HepG2 (cell line): ENCODE measurements at regions of chr9 and their contacts with region 1.

Region 1: DNA sequence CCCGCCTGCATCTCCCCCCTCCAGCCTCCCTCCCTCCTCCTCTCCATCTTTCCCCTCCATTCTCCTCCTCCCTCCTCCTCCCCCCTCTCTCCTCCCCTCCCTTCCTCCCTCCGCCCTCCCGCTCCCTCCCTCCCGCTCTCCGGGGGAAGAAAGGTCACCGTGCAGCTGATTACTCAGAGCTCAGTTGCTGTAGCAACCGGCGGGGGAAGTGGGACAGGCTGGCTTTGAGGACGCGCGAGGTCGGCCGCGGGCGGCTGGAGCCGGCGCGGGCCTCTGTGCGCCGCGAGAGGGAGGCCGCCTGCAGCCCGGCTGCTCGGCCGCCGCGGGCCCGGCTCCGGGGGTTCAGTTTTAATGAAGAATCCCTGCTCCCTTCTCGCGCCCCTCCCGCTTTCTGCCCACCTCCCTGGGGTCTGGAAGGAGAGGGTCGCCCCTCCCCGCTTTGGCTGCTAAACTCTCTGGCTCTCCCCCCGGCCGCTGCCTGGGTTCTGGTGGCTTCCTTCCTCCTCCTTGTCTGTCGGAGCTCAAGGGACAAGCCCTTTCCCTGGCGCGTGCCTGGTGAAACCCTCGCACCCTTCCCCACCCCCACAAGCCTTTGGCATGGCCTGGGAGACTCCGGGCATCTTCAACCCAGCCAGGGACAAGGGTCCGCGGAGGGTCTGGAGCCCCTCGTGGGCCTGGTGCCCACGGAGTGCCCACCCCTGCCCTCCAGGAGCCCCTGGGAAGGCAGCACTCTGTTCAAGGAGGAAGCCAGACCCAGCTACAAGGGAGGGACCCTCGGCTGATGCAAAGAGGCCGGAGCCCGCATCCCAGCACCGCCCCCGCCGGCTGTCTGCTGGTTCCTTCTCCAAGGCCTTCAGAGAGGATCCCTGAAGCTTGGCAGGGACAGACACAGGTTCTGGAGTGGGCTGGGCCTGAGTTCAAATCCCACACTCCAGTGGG is 160.3 kb downstream of the C9orf50 start:
- DNase-seq: peak; percentile 94
- ATAC-seq: peak; percentile 82
- H3K4me3 ChIP-seq: peak overlapping the region; percentile 49 to 78 (median 57)
- H3K27ac ChIP-seq: peak overlapping the region; percentile 73
- H3K4me1 ChIP-seq: peaks cover 47% of the 10 kb centered on the region
- H3K27me3 ChIP-seq: peaks cover 4 to 10% of the 10 kb centered on the region in 2 experiments; a peak in 3 of 5 replicates
- CTCF ChIP-seq: peak; percentile 18; the same call in 1 of the 2 replicates
- EP300 ChIP-seq: peak in 1 of 2 experiments; percentile 78; a peak in 3 of 4 replicates
- POLR2A ChIP-seq: peak; percentile 58 to 60; a peak in 3 of 4 replicates
- RAD21 ChIP-seq: peak; percentile 78

Region 2: GRCh38 chr9:129333953-129334724 is 126.5 kb before region 1 on chr9:
- CTCF ChIA-PET with region 1: no interaction called
- POLR2A ChIA-PET with region 1: interaction called, 10 read pairs
- in situ Hi-C with region 1: no loop called
- intact Hi-C with region 1: no loop called
- DNase-seq: peak; percentile 94
- ATAC-seq: peak; percentile 93
- H3K4me3 ChIP-seq: peak overlapping the region in 2 of 3 experiments; percentile 30 to 65; a peak in 4 of 6 replicates
- H3K27ac ChIP-seq: peak overlapping the region; percentile 93
- H3K4me1 ChIP-seq: peaks cover 56% of the 10 kb centered on the region
- H3K27me3 ChIP-seq: no peaks in the 10 kb centered on the region
- CTCF ChIP-seq: peak; percentile 47; the same call in 1 of the 2 replicates
- EP300 ChIP-seq: peak in 1 of 2 experiments; percentile 84; a peak in 2 of 4 replicates
- POLR2A ChIP-seq: no peak
- RAD21 ChIP-seq: peak; percentile 75

Region 3: DNA sequence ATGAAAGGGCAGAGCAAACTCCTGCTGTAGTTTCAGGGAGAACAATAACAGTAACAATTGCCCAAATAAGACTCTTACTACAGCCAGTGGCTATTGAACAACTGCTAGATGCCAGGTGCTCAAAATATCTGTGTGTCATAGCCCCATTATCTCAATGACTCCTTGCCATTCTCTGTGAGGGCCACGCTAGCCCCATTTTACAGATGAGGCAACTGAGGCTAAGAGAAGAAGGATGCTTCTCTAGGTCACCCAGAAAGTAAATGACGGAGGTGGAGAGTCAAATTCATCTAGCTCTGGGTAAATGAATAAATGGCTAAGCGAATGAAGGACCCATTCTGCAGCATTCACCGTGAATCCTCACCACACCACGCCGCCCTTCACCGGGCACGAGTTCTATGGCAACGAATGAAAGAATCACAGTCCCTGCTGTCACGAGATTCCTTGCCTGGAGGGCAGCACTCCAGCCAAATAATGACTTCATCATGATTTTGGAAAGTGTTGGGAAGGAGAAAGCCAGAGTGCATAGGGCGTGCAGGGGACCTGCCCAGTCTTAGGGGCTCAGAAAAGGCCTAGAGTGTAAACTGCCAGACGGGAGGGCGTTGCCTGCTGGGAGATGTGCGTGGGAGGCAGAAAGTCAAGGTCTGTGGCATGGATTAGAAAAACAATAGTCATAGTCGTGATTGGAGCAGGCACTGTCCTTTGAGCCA is 13.1 kb after region 1 on chr9:
- CTCF ChIA-PET with region 1: no interaction called
- POLR2A ChIA-PET with region 1: interaction called, 10 read pairs
- in situ Hi-C with region 1: no loop called
- intact Hi-C with region 1: no loop called
- DNase-seq: no peak
- ATAC-seq: no peak
- H3K4me3 ChIP-seq: no peak overlapping the region
- H3K27ac ChIP-seq: no peak overlapping the region
- H3K4me1 ChIP-seq: peaks cover 78% of the 10 kb centered on the region
- H3K27me3 ChIP-seq: 0 out of 5 replicates have a peak, but pooled peaks cover 0 to 4% of the 10 kb centered on the region in 2 experiments
- CTCF ChIP-seq: no peak
- EP300 ChIP-seq: no peak
- POLR2A ChIP-seq: no peak
- RAD21 ChIP-seq: no peak

Region 4: GRCh38 chr9:129557192-129558036 is 96.8 kb after region 1 on chr9:
- CTCF ChIA-PET with region 1: no interaction called
- POLR2A ChIA-PET with region 1: interaction called, 22 read pairs
- in situ Hi-C with region 1: no loop called
- intact Hi-C with region 1: no loop called
- DNase-seq: peak; percentile 97
- ATAC-seq: peak; percentile 82
- H3K4me3 ChIP-seq: peak overlapping the region; percentile 8 to 65 (median 44); a peak in 5 of 6 replicates
- H3K27ac ChIP-seq: peak overlapping the region; percentile 95
- H3K4me1 ChIP-seq: peaks cover 97% of the 10 kb centered on the region
- H3K27me3 ChIP-seq: no peaks in the 10 kb centered on the region
- CTCF ChIP-seq: 0 out of 2 replicates have a peak, but pooled peaks have one; percentile 5
- EP300 ChIP-seq: peak; percentile 78 to 98; a peak in 3 of 4 replicates
- POLR2A ChIP-seq: peak in 1 of 2 experiments; percentile 49; a peak in 2 of 4 replicates
- RAD21 ChIP-seq: peak; percentile 78

Region 5: DNA sequence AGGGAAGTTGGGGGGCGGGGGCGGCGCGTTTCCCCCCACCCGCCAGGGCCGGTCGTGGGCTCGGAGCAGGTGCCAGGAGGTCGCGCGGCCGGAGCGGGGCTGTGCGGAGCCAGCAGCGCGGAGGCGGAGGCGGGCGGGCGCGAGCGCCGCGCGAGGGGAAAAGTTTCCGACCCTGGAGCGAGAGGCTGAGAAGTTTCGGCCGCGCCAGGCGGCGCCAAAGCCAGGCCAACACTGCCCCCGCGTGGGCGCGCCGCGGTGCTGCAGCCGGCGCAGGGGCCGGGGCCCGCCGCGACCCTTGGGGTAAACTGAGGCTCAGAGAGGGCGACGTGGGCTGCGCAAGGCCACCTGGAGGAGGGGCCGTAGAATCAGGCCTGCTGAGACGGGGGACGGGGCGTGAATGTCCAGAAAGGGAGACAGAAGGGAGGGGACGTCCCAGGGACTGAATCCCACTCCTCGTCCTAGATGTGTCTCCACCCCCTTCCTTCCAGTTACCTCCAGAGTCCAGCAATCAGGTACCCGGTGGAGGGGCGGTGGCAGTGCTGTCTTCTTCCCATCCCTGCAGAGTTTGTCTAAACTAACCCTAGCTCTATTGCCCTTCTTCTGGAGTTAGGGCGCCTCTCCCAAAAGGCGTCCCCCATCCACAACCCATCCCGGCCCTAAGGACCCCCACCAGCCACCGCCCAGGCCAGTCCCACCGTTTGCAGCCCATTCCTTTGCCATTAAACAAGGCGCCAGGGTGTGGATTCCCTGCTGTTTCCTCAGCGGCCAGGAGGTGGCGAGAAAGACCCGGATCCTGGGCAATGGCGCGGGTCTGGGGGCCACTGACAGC is 150.1 kb after region 1 on chr9:
- CTCF ChIA-PET with region 1: no interaction called
- POLR2A ChIA-PET with region 1: interaction called, 4 read pairs
- in situ Hi-C with region 1: no loop called
- intact Hi-C with region 1: loop called (anchors 1 kb)
- DNase-seq: peak; percentile 48
- ATAC-seq: peak; percentile 57
- H3K4me3 ChIP-seq: peak overlapping the region; percentile 69 to 87 (median 81)
- H3K27ac ChIP-seq: peak overlapping the region; percentile 58
- H3K4me1 ChIP-seq: peaks cover 62% of the 10 kb centered on the region
- H3K27me3 ChIP-seq: no peaks in the 10 kb centered on the region
- CTCF ChIP-seq: peak; percentile 81
- EP300 ChIP-seq: no peak
- POLR2A ChIP-seq: no peak
- RAD21 ChIP-seq: peak; percentile 100